IMR-90 (cell line): ENCODE measurements at regions of chr2 and their contacts with region 1.

Region 1: DNA sequence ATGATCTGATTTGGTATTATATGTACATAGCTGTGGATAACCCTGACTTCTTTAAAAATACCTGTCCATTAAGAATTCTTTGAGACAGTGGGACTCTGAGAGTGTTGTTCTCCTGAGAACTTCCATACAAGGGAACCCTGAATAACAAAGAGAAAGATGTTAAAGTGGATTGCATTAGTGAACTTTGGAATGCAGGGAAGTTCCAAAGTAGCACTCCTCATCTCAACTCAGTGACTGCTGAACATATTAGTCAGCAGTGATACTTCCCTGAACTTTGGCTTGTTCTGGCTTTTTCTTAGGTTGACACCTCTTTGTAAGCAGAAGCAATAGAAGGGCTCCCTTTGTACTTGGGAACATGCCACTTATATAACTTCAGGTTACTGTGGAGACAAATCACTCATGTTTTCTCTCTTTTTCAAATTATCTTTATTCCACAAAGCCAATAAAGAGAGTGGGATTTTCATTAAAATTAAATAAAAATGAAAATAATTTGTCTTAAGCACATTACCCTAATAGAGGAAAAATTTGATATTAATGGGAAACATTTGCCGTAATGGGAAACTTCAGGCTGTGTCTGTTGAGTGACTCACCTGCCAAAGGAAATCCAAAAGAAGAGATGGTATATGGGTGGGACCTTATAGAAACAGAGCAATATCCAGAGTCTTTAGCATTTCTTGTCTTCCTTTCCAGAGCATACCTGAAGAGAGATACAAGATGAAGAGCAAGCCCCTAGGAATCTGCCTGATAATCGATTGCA is 33.3 kb downstream of the CFLAR start:
- DNase-seq: peak; percentile 96
- ATAC-seq: peak; percentile 74
- H3K4me3 ChIP-seq: no peak overlapping the region
- H3K27ac ChIP-seq: peak overlapping the region; percentile 70
- H3K4me1 ChIP-seq: peaks cover 19% of the 10 kb centered on the region
- H3K27me3 ChIP-seq: no peaks in the 10 kb centered on the region
- CTCF ChIP-seq: no peak
- POLR2A ChIP-seq: no peak
- RAD21 ChIP-seq: no peak

Region 2: DNA sequence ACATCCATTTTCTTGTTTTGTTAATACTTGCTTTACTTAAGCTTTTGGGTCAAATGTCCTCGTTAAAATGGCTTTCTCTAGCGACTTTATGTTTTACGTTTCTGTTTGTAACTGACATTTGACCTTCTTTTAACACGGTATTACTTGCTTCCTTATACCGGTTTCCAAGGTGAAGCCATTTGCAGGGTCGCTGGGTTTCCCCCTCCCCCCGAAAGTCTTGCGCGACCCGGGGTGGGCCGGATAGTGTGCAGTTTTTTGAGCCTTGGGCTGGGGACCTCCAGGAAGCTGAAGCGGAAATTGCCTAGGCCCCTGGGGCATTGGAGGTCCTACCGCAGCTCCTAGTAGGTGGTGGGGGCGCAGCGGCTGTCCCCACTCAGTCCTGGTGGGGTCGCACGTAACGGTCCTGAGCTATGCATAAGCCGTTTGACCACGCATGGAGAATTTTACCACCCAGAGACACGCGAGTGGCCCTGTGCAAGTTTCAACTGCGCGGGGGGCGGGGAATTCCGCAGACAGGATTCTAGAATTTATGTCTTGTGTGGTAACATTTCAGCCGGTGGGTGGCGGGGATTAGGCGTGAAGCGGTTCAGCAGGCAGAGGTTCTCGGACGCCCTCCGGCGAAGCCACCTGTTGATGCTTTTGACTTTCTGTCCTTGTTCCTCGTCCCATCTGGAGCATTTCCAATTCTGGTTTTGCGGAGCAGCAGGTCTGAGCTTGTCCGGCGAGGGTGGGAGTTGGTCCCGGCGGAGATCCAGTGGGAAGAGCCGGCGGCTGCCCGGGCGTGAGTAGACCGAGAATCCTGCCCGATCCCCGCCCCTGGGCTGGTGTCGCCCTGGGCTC is 30.9 kb before region 1 on chr2:
- CTCF ChIA-PET with region 1: interaction called, 7 read pairs
- POLR2A ChIA-PET with region 1: no interaction called
- dilution Hi-C with region 1: no loop called
- in situ Hi-C with region 1: no loop called
- intact Hi-C with region 1: loop called (anchors 2 kb)
- DNase-seq: peak; percentile 78
- ATAC-seq: peak; percentile 35
- H3K4me3 ChIP-seq: peak overlapping the region; percentile 64
- H3K27ac ChIP-seq: peak overlapping the region; percentile 92
- H3K4me1 ChIP-seq: peaks cover 4% of the 10 kb centered on the region
- H3K27me3 ChIP-seq: no peaks in the 10 kb centered on the region
- CTCF ChIP-seq: peak; percentile 56
- POLR2A ChIP-seq: no peak
- RAD21 ChIP-seq: peak; percentile 42; the same call in 1 of the 2 replicates

Region 3: GRCh38 chr2:201126308-201127151 is 22.7 kb before region 1 on chr2:
- CTCF ChIA-PET with region 1: no interaction called
- POLR2A ChIA-PET with region 1: no interaction called
- dilution Hi-C with region 1: no loop called
- in situ Hi-C with region 1: no loop called
- intact Hi-C with region 1: loop called (anchors 2 kb)
- DNase-seq: peak; percentile 49
- ATAC-seq: peak; percentile 38
- H3K4me3 ChIP-seq: no peak overlapping the region
- H3K27ac ChIP-seq: peak overlapping the region; percentile 86
- H3K4me1 ChIP-seq: peaks cover 33% of the 10 kb centered on the region
- H3K27me3 ChIP-seq: no peaks in the 10 kb centered on the region
- CTCF ChIP-seq: no peak
- POLR2A ChIP-seq: no peak
- RAD21 ChIP-seq: no peak

Region 4: GRCh38 chr2:201137505-201138400 is 11.5 kb before region 1 on chr2:
- CTCF ChIA-PET with region 1: no interaction called
- POLR2A ChIA-PET with region 1: no interaction called
- dilution Hi-C with region 1: no loop called
- in situ Hi-C with region 1: no loop called
- intact Hi-C with region 1: no loop called
- DNase-seq: no peak
- ATAC-seq: no peak
- H3K4me3 ChIP-seq: no peak overlapping the region
- H3K27ac ChIP-seq: no peak overlapping the region
- H3K4me1 ChIP-seq: no peaks in the 10 kb centered on the region; the same call in 1 of the 2 replicates
- H3K27me3 ChIP-seq: no peaks in the 10 kb centered on the region
- CTCF ChIP-seq: no peak
- POLR2A ChIP-seq: no peak
- RAD21 ChIP-seq: no peak

Region 5: DNA sequence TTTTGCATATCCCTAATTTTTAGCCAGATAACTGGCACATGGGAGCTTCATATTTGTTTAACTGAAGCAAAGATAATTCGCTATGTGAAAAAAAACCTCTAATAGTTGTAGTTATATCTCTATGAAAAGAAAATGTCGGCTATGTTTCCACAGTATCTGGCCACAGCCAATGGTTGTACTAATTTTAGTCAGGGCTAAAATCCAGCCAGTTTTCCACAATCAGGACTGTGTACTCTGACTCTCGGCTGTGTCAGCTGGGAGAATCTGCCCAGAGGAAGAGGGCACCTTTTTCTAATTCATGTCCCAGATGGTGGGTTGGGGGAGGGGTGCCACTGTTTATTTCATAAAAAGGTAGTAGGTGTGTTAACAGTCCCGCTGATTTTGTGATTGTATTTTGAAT is 341.0 kb after region 1 on chr2:
- CTCF ChIA-PET with region 1: no interaction called
- POLR2A ChIA-PET with region 1: no interaction called
- dilution Hi-C with region 1: no loop called
- in situ Hi-C with region 1: no loop called
- intact Hi-C with region 1: no loop called
- DNase-seq: no peak
- ATAC-seq: no peak
- H3K4me3 ChIP-seq: no peak overlapping the region
- H3K27ac ChIP-seq: no peak overlapping the region
- H3K4me1 ChIP-seq: no peaks in the 10 kb centered on the region
- H3K27me3 ChIP-seq: no peaks in the 10 kb centered on the region
- CTCF ChIP-seq: no peak
- POLR2A ChIP-seq: no peak
- RAD21 ChIP-seq: no peak